CD8-positive, alpha-beta T cell (primary cell): ENCODE measurements at regions of chr11 and their contacts with region 1.

Region 1: GRCh38 chr11:118353084-118353710 is 6.2 kb upstream of the UBE4A start:
- DNase-seq: peak in 2 of 9 experiments; percentile 68 to 79
- ATAC-seq: peak; percentile 35
- H3K4me3 ChIP-seq: no peak overlapping the region
- H3K4me3 Mint-ChIP-seq: peak overlapping the region; percentile 43
- H3K27ac ChIP-seq: peak overlapping the region; percentile 13 to 56
- H3K27ac Mint-ChIP-seq: peak overlapping the region; percentile 92
- H3K4me1 ChIP-seq: peaks cover 29% of the 10 kb centered on the region
- H3K4me1 Mint-ChIP-seq: peaks cover 42% of the 10 kb centered on the region
- H3K27me3 ChIP-seq: no peaks in the 10 kb centered on the region
- H3K27me3 Mint-ChIP-seq: no peaks in the 10 kb centered on the region
- CTCF ChIP-seq: peak; percentile 82

Region 2: GRCh38 chr11:117887981-117888566 is 465.1 kb before region 1 on chr11:
- CTCF ChIA-PET with region 1: no interaction called
- POLR2A ChIA-PET with region 1: no interaction called
- intact Hi-C with region 1: no loop called
- DNase-seq: peak in 1 of 9 experiments; percentile 34
- ATAC-seq: no peak
- H3K4me3 ChIP-seq: no peak overlapping the region
- H3K4me3 Mint-ChIP-seq: no peak overlapping the region
- H3K27ac ChIP-seq: no peak overlapping the region
- H3K27ac Mint-ChIP-seq: no peak overlapping the region
- H3K4me1 ChIP-seq: no peaks in the 10 kb centered on the region
- H3K4me1 Mint-ChIP-seq: no peaks in the 10 kb centered on the region
- H3K27me3 ChIP-seq: no peaks in the 10 kb centered on the region
- H3K27me3 Mint-ChIP-seq: peaks cover 5% of the 10 kb centered on the region
- CTCF ChIP-seq: no peak

Region 3: DNA sequence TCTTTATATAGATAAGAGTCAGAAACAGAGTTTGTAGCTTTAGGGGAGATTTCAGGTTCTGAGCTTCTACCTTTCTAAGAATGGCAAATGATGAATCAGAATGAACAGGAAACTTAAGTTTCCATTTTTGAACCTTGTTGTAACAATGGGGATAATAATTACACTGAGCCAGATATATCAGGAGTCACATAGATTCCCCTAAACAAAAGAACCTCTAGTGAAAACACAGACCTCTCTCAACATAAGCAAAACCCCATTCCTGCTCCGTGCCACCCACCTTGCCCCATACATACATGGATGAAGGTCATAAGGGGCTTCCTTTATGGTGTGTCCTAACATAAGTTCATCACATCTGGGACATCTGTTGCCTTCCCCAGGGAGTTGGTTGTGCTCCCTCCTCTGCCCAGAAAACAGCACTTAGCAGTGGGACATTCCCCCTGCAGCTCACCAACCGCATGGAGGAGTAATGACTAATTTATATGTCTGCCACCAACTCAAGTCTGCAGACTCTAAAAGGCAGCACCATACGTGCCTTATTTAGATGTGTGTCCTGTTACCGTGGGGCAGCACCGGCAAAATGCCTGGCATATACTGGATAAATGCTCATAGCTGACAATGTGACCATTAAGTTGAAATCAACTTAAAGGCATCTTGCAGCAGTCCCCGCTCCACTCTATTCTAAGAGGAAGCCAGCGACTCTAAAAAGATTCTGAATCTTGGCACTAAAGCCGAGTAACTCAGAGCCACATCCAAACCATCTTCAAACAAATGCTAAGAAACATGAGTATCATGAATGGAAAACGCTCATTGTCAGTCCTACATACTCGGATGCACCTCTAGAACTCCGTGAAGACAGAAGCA is 136.3 kb before region 1 on chr11:
- CTCF ChIA-PET with region 1: interaction called, 8 read pairs
- POLR2A ChIA-PET with region 1: interaction called, 3 read pairs
- intact Hi-C with region 1: loop called in 1 of 2 experiments (anchors 5 kb)
- DNase-seq: peak in 5 of 9 experiments; percentile 46 to 76 (median 51)
- ATAC-seq: peak; percentile 70
- H3K4me3 ChIP-seq: peak overlapping the region; percentile 20 to 31
- H3K4me3 Mint-ChIP-seq: peak overlapping the region; percentile 81
- H3K27ac ChIP-seq: peak overlapping the region; percentile 10 to 43
- H3K27ac Mint-ChIP-seq: peak overlapping the region; percentile 95
- H3K4me1 ChIP-seq: peaks cover 100% of the 10 kb centered on the region
- H3K4me1 Mint-ChIP-seq: peaks cover 98% of the 10 kb centered on the region
- H3K27me3 ChIP-seq: no peaks in the 10 kb centered on the region
- H3K27me3 Mint-ChIP-seq: no peaks in the 10 kb centered on the region
- CTCF ChIP-seq: no peak

Region 4: DNA sequence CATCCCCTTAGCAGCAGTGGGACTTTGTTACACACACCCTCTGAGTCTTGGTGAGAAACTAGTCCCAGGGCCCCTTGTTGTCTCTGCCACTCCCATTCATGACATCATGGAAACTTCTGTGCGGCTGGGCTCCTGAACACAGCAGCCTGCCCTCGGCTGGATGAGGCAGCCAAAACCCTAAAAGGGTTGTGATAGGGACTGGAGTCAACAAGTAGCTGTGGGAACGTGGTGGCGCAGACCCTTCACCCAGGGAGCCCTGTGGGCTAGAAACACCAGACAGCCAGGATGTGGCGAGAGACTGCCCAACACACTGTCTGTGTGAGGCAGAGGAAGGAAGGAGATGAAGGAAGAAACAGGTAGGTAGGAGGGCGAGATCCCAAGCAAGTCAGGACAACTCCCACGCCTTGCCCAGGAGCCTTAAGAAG is 14.5 kb before region 1 on chr11:
- CTCF ChIA-PET with region 1: interaction called, 34 read pairs
- POLR2A ChIA-PET with region 1: interaction called, 6 read pairs
- intact Hi-C with region 1: loop called in 1 of 2 experiments (anchors 2 kb)
- DNase-seq: peak; percentile 67 to 97 (median 91)
- ATAC-seq: peak; percentile 63
- H3K4me3 ChIP-seq: peak overlapping the region; percentile 87 to 92
- H3K4me3 Mint-ChIP-seq: peak overlapping the region; percentile 93
- H3K27ac ChIP-seq: peak overlapping the region; percentile 72 to 94
- H3K27ac Mint-ChIP-seq: peak overlapping the region; percentile 99
- H3K4me1 ChIP-seq: peaks cover 64% of the 10 kb centered on the region
- H3K4me1 Mint-ChIP-seq: peaks cover 74% of the 10 kb centered on the region
- H3K27me3 ChIP-seq: no peaks in the 10 kb centered on the region
- H3K27me3 Mint-ChIP-seq: no peaks in the 10 kb centered on the region
- CTCF ChIP-seq: no peak

Region 5: GRCh38 chr11:118488480-118489109 is 135.4 kb after region 1 on chr11:
- CTCF ChIA-PET with region 1: no interaction called
- POLR2A ChIA-PET with region 1: no interaction called
- intact Hi-C with region 1: loop called in 1 of 2 experiments (anchors 1 kb)
- DNase-seq: peak; percentile 66 to 88 (median 81)
- ATAC-seq: peak; percentile 77
- H3K4me3 ChIP-seq: no peak overlapping the region
- H3K4me3 Mint-ChIP-seq: no peak overlapping the region
- H3K27ac ChIP-seq: no peak overlapping the region
- H3K27ac Mint-ChIP-seq: no peak overlapping the region
- H3K4me1 ChIP-seq: no peaks in the 10 kb centered on the region
- H3K4me1 Mint-ChIP-seq: peaks cover 4% of the 10 kb centered on the region
- H3K27me3 ChIP-seq: no peaks in the 10 kb centered on the region
- H3K27me3 Mint-ChIP-seq: no peaks in the 10 kb centered on the region
- CTCF ChIP-seq: peak; percentile 93